Right ventricle myocardium inferior (tissue), 1 donor: ENCODE measurements at regions of chr10 and their contacts with region 1.

Region 1: GRCh38 chr10:16116404-16117304 is 256.3 kb upstream of the MINDY3 start:
- DNase-seq: no peak
- ATAC-seq: no peak

Region 2: DNA sequence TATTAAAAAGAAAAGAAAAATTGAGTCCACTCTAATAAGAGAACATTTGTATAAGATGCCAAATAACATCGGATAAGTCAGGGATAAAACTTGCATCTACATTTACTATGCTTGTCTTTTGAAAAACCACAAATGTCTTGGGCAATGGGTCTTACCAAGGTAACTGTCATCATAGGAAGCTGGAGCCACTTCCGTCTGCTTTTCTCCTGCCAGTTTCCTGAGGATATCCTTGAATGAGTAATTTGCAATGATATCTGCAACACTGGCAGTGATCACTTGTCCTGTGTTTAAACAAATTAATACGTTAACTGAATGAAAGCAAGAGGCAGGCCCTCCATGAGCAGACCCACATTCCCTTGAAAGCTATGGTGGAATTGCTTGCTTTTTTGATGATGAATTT is 444.2 kb before region 1 on chr10:
- intact Hi-C with region 1: no loop called
- DNase-seq: no peak
- ATAC-seq: no peak

Region 3: GRCh38 chr10:16141499-16141898 is 24.8 kb after region 1 on chr10:
- intact Hi-C with region 1: no loop called
- DNase-seq: no peak
- ATAC-seq: no peak

Region 4: GRCh38 chr10:16787361-16787791 is 670.7 kb after region 1 on chr10:
- intact Hi-C with region 1: loop called (anchors 10 kb)
- DNase-seq: no peak
- ATAC-seq: no peak